Activated CD8-positive, alpha-beta T cell treated with anti-CD3 and anti-CD28 coated beads, Interleukin-2, amount 10 ng/mL, durations not matched to agents 7 days and 5 days (primary cell): ENCODE measurements at regions of chr3 and their contacts with region 1.

Region 1: GRCh38 chr3:157606011-157606851 is 103.0 kb upstream of the VEPH1 start:
- DNase-seq: peak; percentile 72
- ATAC-seq: peak; percentile 88
- H3K4me3 Mint-ChIP-seq: no peak overlapping the region
- H3K27ac Mint-ChIP-seq: no peak overlapping the region
- H3K4me1 Mint-ChIP-seq: peaks cover 4% of the 10 kb centered on the region
- H3K27me3 Mint-ChIP-seq: peaks cover 6% of the 10 kb centered on the region

Region 2: GRCh38 chr3:157594413-157594812 is 11.8 kb before region 1 on chr3:
- CTCF ChIA-PET with region 1: interaction called, 13 read pairs
- POLR2A ChIA-PET with region 1: no interaction called
- DNase-seq: no peak
- ATAC-seq: no peak
- H3K4me3 Mint-ChIP-seq: no peak overlapping the region
- H3K27ac Mint-ChIP-seq: no peak overlapping the region
- H3K4me1 Mint-ChIP-seq: no peaks in the 10 kb centered on the region
- H3K27me3 Mint-ChIP-seq: peaks cover 11% of the 10 kb centered on the region

Region 3: DNA sequence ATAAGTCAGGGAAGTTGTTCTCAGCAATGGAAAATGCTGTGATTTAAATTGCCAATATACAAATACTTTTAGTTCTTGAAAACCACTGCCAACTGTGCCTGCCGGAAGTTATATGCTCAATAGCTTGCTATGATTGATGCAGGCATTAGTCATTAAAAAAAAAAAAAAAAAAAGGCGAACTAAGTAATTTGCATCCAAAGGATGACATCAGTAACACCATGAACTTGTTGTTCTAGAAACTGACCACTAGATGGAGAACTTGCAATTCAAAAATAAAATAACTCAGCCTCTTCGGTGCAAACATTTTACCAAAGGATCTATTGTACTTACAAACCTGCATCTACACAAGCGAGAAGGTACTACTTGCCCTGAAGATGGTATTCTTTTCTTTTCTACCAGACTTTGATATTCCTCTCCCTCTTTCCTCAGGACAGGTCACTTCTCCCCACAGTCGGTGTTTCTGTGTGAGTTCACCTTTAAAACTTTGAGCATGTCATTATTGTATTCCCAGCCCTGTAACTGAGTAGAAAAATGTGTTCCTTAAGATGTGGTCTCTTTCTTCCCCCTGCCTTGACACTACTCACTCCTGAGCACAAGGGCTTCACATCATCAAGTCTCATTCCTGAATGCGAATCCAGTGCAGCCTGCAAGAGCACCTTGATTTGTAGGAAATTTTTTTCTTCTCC is 12.0 kb after region 1 on chr3:
- CTCF ChIA-PET with region 1: interaction called, 20 read pairs
- POLR2A ChIA-PET with region 1: no interaction called
- DNase-seq: no peak
- ATAC-seq: peak; percentile 53
- H3K4me3 Mint-ChIP-seq: no peak overlapping the region
- H3K27ac Mint-ChIP-seq: no peak overlapping the region
- H3K4me1 Mint-ChIP-seq: no peaks in the 10 kb centered on the region
- H3K27me3 Mint-ChIP-seq: no peaks in the 10 kb centered on the region